ENCODE measurements at regions of chr2 and their contacts with region 1.

Region 1: GRCh38 chr2:231452799-231453508 is 11.3 kb downstream of the NCL start:
- DNase-seq: no peak
- ATAC-seq: peak; percentile 13
- H3K4me3 ChIP-seq: no peak overlapping the region
- H3K27ac ChIP-seq: no peak overlapping the region
- H3K4me1 ChIP-seq: no peaks in the 10 kb centered on the region
- H3K27me3 ChIP-seq: no peaks in the 10 kb centered on the region
- CTCF ChIP-seq: no peak
- EP300 ChIP-seq: no peak
- POLR2A ChIP-seq: peak; percentile 65
- RAD21 ChIP-seq: no peak

Region 2: DNA sequence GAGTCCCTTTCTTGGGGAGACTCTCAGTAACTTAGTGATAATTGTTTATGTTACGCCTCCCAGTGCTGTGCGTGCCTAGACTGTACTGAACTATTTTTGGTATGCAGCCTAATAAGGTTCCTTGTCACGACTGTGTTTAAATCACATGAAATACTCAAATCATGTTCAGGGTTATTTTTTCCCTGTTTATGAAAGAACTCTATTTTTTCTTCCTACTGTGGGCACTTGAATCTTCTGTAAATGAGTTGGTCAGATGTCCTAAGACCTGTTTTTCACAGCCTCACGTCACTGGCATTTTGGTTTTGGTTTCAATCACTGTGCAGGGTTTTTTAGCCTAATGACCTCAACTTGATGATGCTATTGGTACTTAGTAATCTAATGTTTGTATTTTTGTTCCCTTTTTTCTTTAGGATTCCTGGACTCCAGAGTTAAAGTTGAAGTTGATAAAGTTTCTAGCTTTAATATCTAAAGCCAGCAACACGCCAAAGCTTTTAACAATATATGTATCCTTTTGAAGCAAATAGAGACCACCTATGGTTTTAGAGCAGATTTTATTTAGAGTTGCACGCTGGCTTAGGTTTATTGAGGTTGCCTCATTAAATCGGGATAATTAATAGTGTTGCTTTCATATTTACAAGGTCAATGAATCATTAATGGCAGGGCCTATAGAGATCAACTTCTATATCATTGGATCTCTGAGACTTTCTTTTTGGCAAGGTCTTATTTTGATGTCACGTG is 230.5 kb before region 1 on chr2:
- CTCF ChIA-PET with region 1: interaction called, 63 read pairs
- POLR2A ChIA-PET with region 1: interaction called, 3 read pairs
- RAD21 ChIA-PET with region 1: interaction called, 59 read pairs
- SMC1A ChIA-PET with region 1: interaction called, 25 read pairs
- in situ Hi-C with region 1: no loop called
- intact Hi-C with region 1: loop called (anchors 1 kb)
- DNase-seq: peak; percentile 72
- ATAC-seq: peak; percentile 91
- H3K4me3 ChIP-seq: no peak overlapping the region
- H3K27ac ChIP-seq: peak overlapping the region; percentile 60
- H3K4me1 ChIP-seq: peaks cover 4% of the 10 kb centered on the region
- H3K27me3 ChIP-seq: no peaks in the 10 kb centered on the region
- CTCF ChIP-seq: 0 out of 6 replicates have a peak, but pooled peaks of 1 of the 3 experiments have one; percentile 8
- EP300 ChIP-seq: peak; percentile 94 to 99
- POLR2A ChIP-seq: no peak
- RAD21 ChIP-seq: no peak

Region 3: GRCh38 chr2:231260442-231261208 is 192.3 kb before region 1 on chr2:
- CTCF ChIA-PET with region 1: no interaction called
- POLR2A ChIA-PET with region 1: no interaction called
- RAD21 ChIA-PET with region 1: no interaction called
- SMC1A ChIA-PET with region 1: no interaction called
- in situ Hi-C with region 1: no loop called
- intact Hi-C with region 1: no loop called
- DNase-seq: no peak
- ATAC-seq: no peak
- H3K4me3 ChIP-seq: no peak overlapping the region
- H3K27ac ChIP-seq: no peak overlapping the region
- H3K4me1 ChIP-seq: no peaks in the 10 kb centered on the region
- H3K27me3 ChIP-seq: no peaks in the 10 kb centered on the region
- CTCF ChIP-seq: no peak
- EP300 ChIP-seq: no peak
- POLR2A ChIP-seq: no peak
- RAD21 ChIP-seq: no peak

Region 4: DNA sequence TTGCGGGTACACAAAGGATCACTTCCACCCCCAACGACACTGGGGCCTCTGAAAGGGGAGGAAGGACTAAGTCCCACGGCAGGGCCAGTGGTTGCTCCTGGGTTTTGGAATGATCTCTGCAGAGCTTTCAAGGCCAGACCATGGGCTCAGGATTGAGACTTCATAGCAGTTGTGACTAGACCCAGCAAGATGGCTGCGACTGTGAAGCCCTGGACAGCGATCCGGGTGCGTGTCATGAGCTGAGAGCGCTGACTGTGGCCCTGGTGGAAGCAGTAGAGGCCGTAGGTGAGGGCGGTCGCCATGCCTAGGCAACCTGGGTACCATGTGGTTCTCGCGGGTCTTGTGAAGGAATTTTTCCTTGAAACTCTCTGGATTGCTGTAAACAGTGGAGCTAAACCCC is 16.0 kb before region 1 on chr2:
- CTCF ChIA-PET with region 1: interaction called, 11 read pairs
- POLR2A ChIA-PET with region 1: no interaction called
- RAD21 ChIA-PET with region 1: no interaction called
- SMC1A ChIA-PET with region 1: interaction called, 5 read pairs
- in situ Hi-C with region 1: no loop called
- intact Hi-C with region 1: no loop called
- DNase-seq: no peak
- ATAC-seq: no peak
- H3K4me3 ChIP-seq: no peak overlapping the region
- H3K27ac ChIP-seq: no peak overlapping the region
- H3K4me1 ChIP-seq: no peaks in the 10 kb centered on the region
- H3K27me3 ChIP-seq: no peaks in the 10 kb centered on the region
- CTCF ChIP-seq: no peak
- EP300 ChIP-seq: no peak
- POLR2A ChIP-seq: no peak
- RAD21 ChIP-seq: no peak

Measured in GM12878 (cell line).